ENCODE measurements at regions of chr11 and their contacts with region 1.

Region 1: DNA sequence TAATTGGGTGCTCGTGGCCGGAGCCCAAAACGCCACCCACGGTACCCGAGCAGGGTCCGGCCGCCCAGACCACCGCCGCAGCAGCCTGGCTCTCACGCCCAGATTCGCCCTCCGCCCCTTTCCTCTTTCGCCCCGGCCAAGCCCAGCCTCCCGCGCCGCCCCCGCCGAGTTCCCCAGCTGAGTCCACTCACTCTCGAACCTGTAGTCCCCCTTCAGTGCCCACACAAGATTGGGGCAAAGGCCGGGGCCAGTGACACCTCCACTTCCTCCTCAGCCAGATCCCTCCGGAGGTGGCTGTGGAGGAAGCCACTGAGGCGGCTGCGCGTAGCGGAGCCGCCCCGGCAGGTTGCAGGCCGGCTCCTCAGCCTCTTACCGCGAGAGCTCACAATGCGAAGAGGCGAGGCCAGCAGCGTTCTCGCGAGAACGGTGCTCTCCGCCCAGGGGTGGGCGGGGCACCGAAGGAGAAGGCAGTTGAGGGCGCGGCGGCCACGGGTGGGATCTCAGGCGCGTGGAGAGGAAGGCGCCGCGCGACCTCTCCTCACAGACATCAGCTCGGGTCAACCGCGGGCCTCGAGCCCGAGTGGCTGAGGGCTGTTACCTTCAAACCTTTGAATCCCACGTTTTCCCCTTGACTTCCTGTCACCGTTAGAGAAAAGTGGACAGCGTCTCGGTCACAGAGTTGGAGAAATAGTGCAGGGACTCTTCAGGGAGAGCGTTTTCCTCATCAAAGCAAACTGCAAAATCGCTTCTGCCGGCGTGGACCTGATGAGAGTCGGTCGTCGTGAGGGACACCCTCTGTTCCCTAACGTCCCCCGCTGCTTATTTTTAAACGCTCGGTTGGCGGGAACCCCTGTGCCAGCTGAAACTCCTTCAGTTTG is at the start of gene BTBD10:
- DNase-seq: peak; percentile 94
- H3K4me3 Mint-ChIP-seq: peak within 1 kb of the TSS; percentile 97
- H3K27ac Mint-ChIP-seq: peak within 1 kb of the TSS; percentile 97
- H3K4me1 Mint-ChIP-seq: peaks cover 42% of the 10 kb centered on the region
- H3K27me3 Mint-ChIP-seq: peaks cover 4% of the 10 kb centered on the region
- total RNA-seq, gene BTBD10: 26.0 to 26.3 TPM

Region 2: DNA sequence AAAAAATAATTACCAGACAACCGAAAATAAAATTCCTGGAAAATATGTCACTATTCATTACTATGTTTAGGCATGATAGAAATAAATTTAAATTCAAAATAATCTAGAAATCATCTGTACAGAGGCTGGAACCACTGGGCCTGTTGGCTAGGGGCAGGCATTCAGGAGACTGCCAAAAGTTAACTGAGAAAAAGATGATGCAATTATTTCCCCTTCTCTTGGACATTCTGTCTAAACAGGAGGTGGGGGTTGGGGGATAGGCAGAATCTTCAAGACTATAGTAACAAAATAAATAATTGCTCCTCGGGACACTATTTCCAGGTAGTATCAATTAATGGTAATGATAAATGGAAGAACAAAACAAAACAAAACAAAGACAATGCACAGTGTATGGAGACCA is 14.3 kb before region 1 on chr11:
- CTCF ChIA-PET with region 1: interaction called, 3 read pairs
- POLR2A ChIA-PET with region 1: interaction called, 20 read pairs
- DNase-seq: no peak
- H3K4me3 Mint-ChIP-seq: no peak overlapping the region
- H3K27ac Mint-ChIP-seq: no peak overlapping the region
- H3K4me1 Mint-ChIP-seq: peaks cover 15% of the 10 kb centered on the region
- H3K27me3 Mint-ChIP-seq: no peaks in the 10 kb centered on the region

Region 3: DNA sequence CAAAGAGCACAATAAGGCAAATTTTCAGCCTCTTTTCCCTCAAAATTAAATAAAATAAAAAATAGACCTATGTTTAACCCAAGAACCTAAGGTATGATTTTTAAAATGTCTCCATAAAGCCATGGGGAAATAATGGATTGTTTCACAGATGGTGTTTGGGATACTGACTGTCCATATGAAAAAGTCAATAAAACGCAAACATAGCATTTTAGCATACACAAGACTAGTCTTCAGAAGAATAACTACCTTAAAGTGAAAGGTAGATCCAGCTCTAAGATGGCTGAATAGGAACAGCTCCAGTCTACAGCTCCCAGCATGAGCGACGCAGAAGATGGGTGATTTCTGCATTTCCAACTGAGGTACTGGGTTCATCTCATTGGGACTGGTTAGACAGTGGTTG is 16.5 kb after region 1 on chr11:
- CTCF ChIA-PET with region 1: no interaction called
- POLR2A ChIA-PET with region 1: no interaction called
- DNase-seq: no peak
- H3K4me3 Mint-ChIP-seq: no peak overlapping the region
- H3K27ac Mint-ChIP-seq: no peak overlapping the region
- H3K4me1 Mint-ChIP-seq: no peaks in the 10 kb centered on the region
- H3K27me3 Mint-ChIP-seq: peaks cover 26% of the 10 kb centered on the region

Region 4: GRCh38 chr11:13668102-13668956 is 205.2 kb after region 1 on chr11 and contains the start of gene FAR1:
- CTCF ChIA-PET with region 1: interaction called, 7 read pairs
- POLR2A ChIA-PET with region 1: interaction called, 26 read pairs
- DNase-seq: peak; percentile 98
- H3K4me3 Mint-ChIP-seq: peak within 1 kb of the TSS; percentile 95
- H3K27ac Mint-ChIP-seq: peak within 1 kb of the TSS; percentile 93
- H3K4me1 Mint-ChIP-seq: peaks cover 44% of the 10 kb centered on the region
- H3K27me3 Mint-ChIP-seq: peaks cover 7% of the 10 kb centered on the region
- total RNA-seq, gene FAR1: 55.1 to 57.6 TPM